ENCODE measurements at regions of chr20 and their contacts with region 1.

Region 1: GRCh38 chr20:31822421-31823330 is 3.5 kb downstream of the MYLK2 start:
- DNase-seq: peak; percentile 49 to 97
- H3K4me3 ChIP-seq: peak overlapping the region in 2 of 4 experiments; percentile 5 to 35; a peak in 2 of 8 replicates
- H3K27ac ChIP-seq: no peak overlapping the region
- H3K4me1 ChIP-seq: peaks cover 0 to 8% (median 2%) of the 10 kb centered on the region in 4 experiments; a peak in 4 of 7 replicates
- H3K27me3 ChIP-seq: no peaks in the 10 kb centered on the region
- CTCF ChIP-seq: peak; percentile 97 to 100 (median 98)
- EP300 ChIP-seq: peak in 1 of 2 experiments; percentile 83; a peak in 1 of 3 replicates
- POLR2A ChIP-seq: no peak
- RAD21 ChIP-seq: peak; percentile 100

Region 2: GRCh38 chr20:31811796-31812728 is 10.6 kb before region 1 on chr20:
- CTCF ChIA-PET with region 1: interaction called, 12 read pairs
- POLR2A ChIA-PET with region 1: no interaction called
- DNase-seq: no peak
- H3K4me3 ChIP-seq: no peak overlapping the region
- H3K27ac ChIP-seq: no peak overlapping the region
- H3K4me1 ChIP-seq: peaks cover 4 to 9% (median 8%) of the 10 kb centered on the region in 4 experiments; a peak in 6 of 7 replicates
- H3K27me3 ChIP-seq: no peaks in the 10 kb centered on the region
- CTCF ChIP-seq: no peak
- EP300 ChIP-seq: no peak
- POLR2A ChIP-seq: no peak
- RAD21 ChIP-seq: no peak

Region 3: GRCh38 chr20:31835977-31836852 is 13.5 kb after region 1 on chr20:
- CTCF ChIA-PET with region 1: interaction called, 73 read pairs
- POLR2A ChIA-PET with region 1: interaction called, 3 read pairs
- DNase-seq: no peak
- H3K4me3 ChIP-seq: no peak overlapping the region
- H3K27ac ChIP-seq: no peak overlapping the region
- H3K4me1 ChIP-seq: peaks cover 0 to 17% (median 16%) of the 10 kb centered on the region in 4 experiments; a peak in 6 of 7 replicates
- H3K27me3 ChIP-seq: no peaks in the 10 kb centered on the region
- CTCF ChIP-seq: no peak
- EP300 ChIP-seq: no peak
- POLR2A ChIP-seq: no peak
- RAD21 ChIP-seq: no peak

Region 4: DNA sequence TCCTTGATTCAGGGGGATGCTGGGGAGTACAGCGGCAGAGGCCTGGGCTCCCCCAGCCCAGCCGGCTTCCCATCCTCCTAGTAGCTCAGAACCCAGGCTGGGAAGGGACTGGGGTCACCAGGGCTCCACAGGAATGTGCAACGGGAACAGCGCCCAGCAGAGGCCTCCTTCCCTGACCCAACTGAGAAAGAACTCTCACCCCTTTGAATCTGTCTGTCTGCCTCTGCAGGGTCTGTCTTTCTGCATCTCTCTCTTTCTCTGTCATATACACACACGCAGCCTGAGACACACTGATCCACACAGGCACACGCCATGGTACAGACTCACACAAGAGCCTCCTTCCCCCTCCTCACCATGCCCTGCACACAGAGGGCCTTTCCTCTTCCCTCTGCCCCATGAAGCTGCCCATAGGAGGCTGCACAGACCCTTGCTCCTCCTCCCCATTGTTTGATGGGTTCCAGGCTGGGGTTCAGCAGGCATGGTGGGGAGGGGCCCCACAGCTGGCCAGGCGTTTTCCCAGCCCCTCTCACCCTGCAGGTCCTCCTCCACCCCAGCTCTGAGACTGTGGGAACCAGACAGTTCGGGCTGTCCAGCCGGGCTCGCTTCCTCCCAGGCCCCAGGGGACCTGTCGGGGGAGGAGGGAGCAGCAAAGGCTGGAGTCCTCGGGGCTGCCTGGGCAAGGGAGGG is 19.9 kb after region 1 on chr20:
- CTCF ChIA-PET with region 1: interaction called, 73 read pairs
- POLR2A ChIA-PET with region 1: interaction called, 3 read pairs
- DNase-seq: no peak
- H3K4me3 ChIP-seq: no peak overlapping the region
- H3K27ac ChIP-seq: no peak overlapping the region
- H3K4me1 ChIP-seq: peaks cover 4 to 38% (median 32%) of the 10 kb centered on the region in 4 experiments
- H3K27me3 ChIP-seq: peaks cover 0 to under 1% (median 0%) of the 10 kb centered on the region in 4 experiments; a peak in 1 of 7 replicates
- CTCF ChIP-seq: no peak
- EP300 ChIP-seq: no peak
- POLR2A ChIP-seq: no peak
- RAD21 ChIP-seq: no peak

Region 5: DNA sequence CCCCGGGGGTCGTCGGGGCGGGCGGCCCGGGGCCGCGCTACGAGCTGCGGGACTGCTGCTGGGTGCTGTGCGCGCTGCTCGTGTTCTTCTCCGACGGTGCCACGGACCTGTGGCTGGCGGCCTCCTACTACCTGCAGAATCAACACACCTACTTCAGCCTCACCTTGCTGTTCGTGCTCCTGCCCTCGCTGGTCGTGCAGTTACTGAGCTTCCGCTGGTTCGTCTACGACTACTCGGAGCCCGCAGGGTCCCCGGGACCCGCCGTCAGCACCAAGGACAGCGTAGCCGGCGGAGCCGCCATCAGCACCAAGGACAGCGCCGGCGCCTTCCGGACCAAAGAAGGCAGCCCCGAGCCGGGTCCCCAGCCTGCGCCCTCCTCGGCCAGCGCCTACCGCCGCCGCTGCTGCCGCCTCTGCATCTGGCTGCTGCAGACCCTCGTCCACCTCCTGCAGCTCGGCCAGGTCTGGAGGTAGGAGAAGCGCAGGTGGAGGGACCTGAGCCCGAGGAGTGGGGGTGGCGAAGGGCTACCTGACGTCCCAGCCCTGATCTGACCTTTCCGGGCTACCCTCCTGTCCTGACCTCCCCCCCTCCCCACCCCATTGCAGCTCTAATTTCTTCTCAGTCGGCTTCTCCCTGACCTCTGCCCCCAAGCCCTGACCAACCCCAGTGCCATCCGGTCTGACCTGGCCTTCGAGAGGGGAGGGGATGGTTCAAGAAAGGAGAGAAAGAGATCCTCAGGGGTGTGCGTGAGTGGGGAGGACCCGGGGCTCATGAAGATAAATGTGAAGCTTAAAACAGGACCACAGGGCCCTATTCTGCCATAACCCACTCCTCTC is 145.8 kb after region 1 on chr20:
- CTCF ChIA-PET with region 1: interaction called, 13 read pairs
- POLR2A ChIA-PET with region 1: no interaction called
- DNase-seq: peak; percentile 77 to 99
- H3K4me3 ChIP-seq: peak overlapping the region; percentile 43 to 70 (median 64)
- H3K27ac ChIP-seq: no peak overlapping the region
- H3K4me1 ChIP-seq: peaks cover 0 to 12% (median 7%) of the 10 kb centered on the region in 4 experiments; a peak in 5 of 7 replicates
- H3K27me3 ChIP-seq: peaks cover 0 to 8% (median 2%) of the 10 kb centered on the region in 4 experiments; a peak in 5 of 7 replicates
- CTCF ChIP-seq: peak in 1 of 3 experiments; percentile 23; a peak in 1 of 4 replicates
- EP300 ChIP-seq: peak in 1 of 2 experiments; percentile 69; a peak in 1 of 3 replicates
- POLR2A ChIP-seq: 0 out of 3 replicates have a peak, but pooled peaks of 1 of the 2 experiments have one; percentile 49
- RAD21 ChIP-seq: peak; percentile 29 to 48; a peak in 3 of 4 replicates

Region 6: DNA sequence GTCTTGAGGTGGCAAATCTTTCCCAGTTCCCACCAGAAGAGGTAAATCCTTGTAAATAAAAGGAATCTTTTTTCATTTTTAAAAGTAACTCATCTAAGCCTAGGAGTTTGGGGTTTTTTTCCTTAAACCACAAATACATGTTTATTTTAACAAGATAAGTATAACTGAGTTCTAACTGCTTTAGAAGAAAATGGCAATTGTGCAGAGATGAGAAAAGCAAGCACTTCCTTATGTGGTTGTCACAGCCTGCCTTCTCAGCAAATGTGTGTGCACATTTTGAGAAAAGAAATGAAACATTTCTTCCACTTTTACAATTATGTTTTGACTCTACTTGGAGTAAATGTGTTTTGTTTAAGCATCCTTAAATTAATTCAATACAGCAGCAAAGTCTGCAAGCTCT is 247.0 kb after region 1 on chr20:
- CTCF ChIA-PET with region 1: no interaction called
- POLR2A ChIA-PET with region 1: no interaction called
- DNase-seq: no peak
- H3K4me3 ChIP-seq: no peak overlapping the region
- H3K27ac ChIP-seq: no peak overlapping the region
- H3K4me1 ChIP-seq: peaks cover 0 to 3% (median 0%) of the 10 kb centered on the region in 4 experiments; a peak in 2 of 7 replicates
- H3K27me3 ChIP-seq: no peaks in the 10 kb centered on the region
- CTCF ChIP-seq: no peak
- EP300 ChIP-seq: no peak
- POLR2A ChIP-seq: no peak
- RAD21 ChIP-seq: no peak

Measured in H1 (cell line).